Dorsolateral prefrontal cortex (tissue), 120 donors: ENCODE measurements at regions of chr2 and their contacts with region 1.

Region 1: GRCh38 chr2:60550178-60550983 is 3.1 kb downstream of the BCL11A start:
- DNase-seq: peak in 7 of 10 donors; percentile 63 to 81 (median 73)
- H3K4me3 ChIP-seq: peak overlapping the region; percentile 59 to 91 (median 77)
- H3K27ac ChIP-seq: peak overlapping the region in 55 of 59 donors; percentile 20 to 90 (median 77)
- H3K27me3 ChIP-seq: peaks cover 0 to 69% (median 13%) of the 10 kb centered on the region in 45 donors
- CTCF ChIP-seq: peak; percentile 46 to 84 (median 68)

Region 2: GRCh38 chr2:58574873-58575272 is 1975.5 kb before region 1 on chr2:
- intact Hi-C with region 1: loop called in 1 of 2 experiments (anchors 5 kb)
- DNase-seq: no peak
- H3K4me3 ChIP-seq: no peak overlapping the region
- H3K27ac ChIP-seq: no peak overlapping the region
- H3K27me3 ChIP-seq: no peaks in the 10 kb centered on the region
- CTCF ChIP-seq: no peak

Region 3: DNA sequence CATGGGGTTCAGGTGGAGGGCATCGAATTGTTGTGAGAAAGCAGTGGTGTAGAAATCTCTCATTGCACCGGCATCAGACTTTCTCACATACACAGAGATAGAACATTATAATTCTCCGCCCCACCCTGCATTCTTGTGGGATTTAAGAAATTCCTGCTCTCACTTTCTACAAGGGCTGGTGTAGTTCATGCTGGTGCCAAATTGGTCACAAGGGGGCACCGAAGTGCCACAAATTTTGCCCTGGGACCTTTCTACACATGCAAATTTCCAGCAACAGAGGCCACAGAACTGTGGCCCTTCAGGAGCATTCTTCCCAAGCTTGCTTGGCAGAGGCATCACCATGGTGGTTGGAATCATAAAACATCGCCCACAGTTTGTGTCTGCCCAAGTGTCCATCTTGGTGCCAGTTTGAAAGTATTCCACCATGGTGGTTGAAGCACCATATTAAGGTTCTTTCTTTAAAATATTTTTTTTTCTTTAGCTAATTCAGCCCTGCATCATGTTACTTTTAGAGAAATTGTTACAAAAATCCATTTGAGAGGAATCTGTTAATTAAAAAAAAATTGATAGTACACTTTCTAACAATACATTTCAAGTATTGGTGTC is 1788.1 kb before region 1 on chr2:
- intact Hi-C with region 1: loop called (anchors 10 kb)
- DNase-seq: peak; percentile 5 to 67 (median 50)
- H3K4me3 ChIP-seq: no peak overlapping the region
- H3K27ac ChIP-seq: no peak overlapping the region
- H3K27me3 ChIP-seq: no peaks in the 10 kb centered on the region
- CTCF ChIP-seq: peak; percentile 21 to 75 (median 60)

Region 4: GRCh38 chr2:59301466-59302402 is 1248.6 kb before region 1 on chr2:
- intact Hi-C with region 1: loop called in 1 of 2 experiments (anchors 2 kb)
- DNase-seq: peak in 4 of 10 donors; percentile 6 to 35 (median 18)
- H3K4me3 ChIP-seq: peak overlapping the region in 12 of 59 donors; percentile 0 to 36 (median 16)
- H3K27ac ChIP-seq: no peak overlapping the region
- H3K27me3 ChIP-seq: peaks cover 0 to 5% (median 0%) of the 10 kb centered on the region in 45 donors
- CTCF ChIP-seq: peak in 55 of 56 donors; percentile 26 to 79 (median 63)